Activated CD8-positive, alpha-beta memory T cell treated with anti-CD3 and anti-CD28 coated beads, Interleukin-2, amount 10 ng/mL, durations not matched to agents 7 days and 5 days (primary cell): ENCODE measurements at regions of chr6 and their contacts with region 1.

Region 1: DNA sequence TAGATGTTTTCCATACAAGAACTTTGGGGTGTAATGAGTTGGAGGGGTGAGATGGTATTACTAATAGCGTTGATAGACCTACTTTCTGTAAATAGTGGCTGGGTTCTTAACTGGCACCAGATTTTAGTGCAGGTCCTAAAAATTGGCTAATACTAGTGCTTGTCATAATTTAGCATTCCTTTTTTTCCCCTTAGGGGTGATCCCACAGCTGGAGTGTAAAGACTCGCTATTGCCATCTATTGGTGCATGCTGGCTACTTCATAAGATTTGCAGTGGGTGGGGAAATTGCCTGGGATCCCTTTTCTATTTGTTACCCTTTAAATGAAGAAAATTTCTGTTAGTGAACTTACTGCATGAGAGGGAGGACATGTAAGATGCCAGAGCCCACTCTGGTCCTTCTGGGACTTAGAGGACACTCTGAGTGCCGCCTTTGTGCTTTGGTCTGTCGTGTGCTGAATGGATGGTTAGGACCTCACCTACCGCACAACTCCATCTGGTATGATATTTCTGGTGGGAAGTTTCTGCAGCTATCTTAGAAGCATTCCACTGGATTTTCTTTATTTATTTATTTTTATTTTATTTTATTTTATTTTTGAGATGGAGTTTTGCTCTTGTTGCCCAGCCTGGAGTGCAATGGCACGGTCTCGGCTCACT is 195.5 kb downstream of the JARID2 start:
- DNase-seq: no peak
- ATAC-seq: peak; percentile 37
- H3K4me3 Mint-ChIP-seq: no peak overlapping the region
- H3K27ac Mint-ChIP-seq: peak overlapping the region; percentile 31
- H3K4me1 Mint-ChIP-seq: peaks cover 76% of the 10 kb centered on the region
- H3K27me3 Mint-ChIP-seq: no peaks in the 10 kb centered on the region

Region 2: GRCh38 chr6:15327271-15327670 is 114.1 kb before region 1 on chr6:
- CTCF ChIA-PET with region 1: interaction called, 11 read pairs
- DNase-seq: peak; percentile 67
- ATAC-seq: peak; percentile 63
- H3K4me3 Mint-ChIP-seq: no peak overlapping the region
- H3K27ac Mint-ChIP-seq: peak overlapping the region; percentile 18
- H3K4me1 Mint-ChIP-seq: peaks cover 82% of the 10 kb centered on the region
- H3K27me3 Mint-ChIP-seq: no peaks in the 10 kb centered on the region

Region 3: DNA sequence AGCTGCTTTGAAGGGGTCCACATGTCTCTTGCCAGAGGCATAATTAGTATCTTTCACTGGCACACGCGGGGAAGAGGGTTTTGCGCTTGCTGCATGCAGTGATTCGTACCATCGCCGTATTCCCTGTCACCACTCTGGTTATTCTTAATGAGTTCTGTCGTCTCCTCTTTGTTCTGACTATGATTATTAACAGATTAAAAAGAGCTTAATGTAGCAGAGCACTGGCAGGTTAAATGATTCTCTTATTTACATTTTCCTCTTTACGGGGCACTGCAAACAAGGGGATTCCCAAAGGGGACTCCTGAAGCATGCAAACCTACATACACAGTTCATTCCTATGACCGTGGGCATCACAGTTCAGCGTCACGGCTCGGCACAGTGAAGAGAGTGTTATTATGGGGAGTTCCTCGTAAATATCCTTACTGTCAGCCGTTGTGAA is 16.7 kb after region 1 on chr6:
- CTCF ChIA-PET with region 1: interaction called, 10 read pairs
- DNase-seq: no peak
- ATAC-seq: no peak
- H3K4me3 Mint-ChIP-seq: no peak overlapping the region
- H3K27ac Mint-ChIP-seq: no peak overlapping the region
- H3K4me1 Mint-ChIP-seq: peaks cover 21% of the 10 kb centered on the region
- H3K27me3 Mint-ChIP-seq: no peaks in the 10 kb centered on the region